WTC11 (cell line): ENCODE measurements at regions of chr17 and their contacts with region 1.

Region 1: GRCh38 chr17:31433091-31433790 is 41.8 kb downstream of the RAB11FIP4 start:
- DNase-seq: no peak
- ATAC-seq: no peak
- H3K4me3 Mint-ChIP-seq: no peak overlapping the region
- H3K27ac Mint-ChIP-seq: no peak overlapping the region
- H3K4me1 Mint-ChIP-seq: peaks cover 13% of the 10 kb centered on the region
- H3K27me3 Mint-ChIP-seq: no peaks in the 10 kb centered on the region; the same call in 1 of the 2 replicates
- CTCF ChIP-seq: no peak

Region 2: DNA sequence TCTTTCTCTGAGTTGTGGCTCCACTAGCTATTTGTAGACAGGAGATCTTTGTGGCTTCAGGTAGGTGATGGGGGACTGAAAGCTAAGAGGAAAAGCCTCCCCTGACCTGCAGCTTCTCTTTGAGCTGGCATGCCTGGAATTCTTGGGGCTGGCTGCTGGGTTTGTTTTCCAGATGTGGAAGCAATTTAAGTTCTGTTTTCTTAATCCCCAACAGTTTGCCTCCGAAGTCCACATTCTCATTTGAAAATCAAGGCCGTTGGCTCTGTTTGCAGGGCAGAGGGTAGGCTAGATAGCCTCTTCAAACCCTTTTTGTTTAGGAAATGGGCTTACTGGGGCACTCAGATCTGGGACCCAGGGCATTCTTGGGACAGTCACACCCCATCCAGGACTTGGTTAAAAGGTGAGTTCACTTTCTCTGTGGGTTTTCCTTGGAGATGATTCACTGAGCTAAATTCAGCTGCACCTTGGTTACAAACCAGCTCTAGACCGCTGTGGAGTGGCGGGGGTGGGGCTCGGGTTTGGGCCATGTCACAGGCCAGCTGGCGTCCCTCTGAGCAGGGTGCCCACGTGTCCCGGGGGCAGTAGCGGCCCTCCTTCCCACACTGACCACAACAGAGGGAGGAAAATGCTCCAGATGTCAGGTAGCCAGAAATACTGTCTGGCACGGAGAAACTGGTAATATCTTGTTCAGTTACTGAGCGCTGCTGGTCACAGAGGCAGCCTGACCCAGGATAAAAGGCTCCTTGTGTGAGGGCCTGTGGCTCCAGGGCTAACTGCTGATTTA is 66.7 kb after region 1 on chr17:
- CTCF ChIA-PET with region 1: interaction called, 11 read pairs
- POLR2A ChIA-PET with region 1: interaction called, 4 read pairs
- DNase-seq: no peak
- ATAC-seq: peak; percentile 67
- H3K4me3 Mint-ChIP-seq: no peak overlapping the region
- H3K27ac Mint-ChIP-seq: peak overlapping the region; percentile 79
- H3K4me1 Mint-ChIP-seq: peaks cover 62% of the 10 kb centered on the region
- H3K27me3 Mint-ChIP-seq: no peaks in the 10 kb centered on the region
- CTCF ChIP-seq: no peak

Region 3: GRCh38 chr17:31509095-31509804 is 76.0 kb after region 1 on chr17:
- CTCF ChIA-PET with region 1: interaction called, 13 read pairs
- POLR2A ChIA-PET with region 1: no interaction called
- DNase-seq: no peak
- ATAC-seq: no peak
- H3K4me3 Mint-ChIP-seq: no peak overlapping the region
- H3K27ac Mint-ChIP-seq: peak overlapping the region; percentile 92
- H3K4me1 Mint-ChIP-seq: peaks cover 18% of the 10 kb centered on the region
- H3K27me3 Mint-ChIP-seq: no peaks in the 10 kb centered on the region
- CTCF ChIP-seq: no peak

Region 4: GRCh38 chr17:31524926-31525800 is 91.9 kb after region 1 on chr17:
- CTCF ChIA-PET with region 1: interaction called, 49 read pairs
- POLR2A ChIA-PET with region 1: interaction called, 3 read pairs
- DNase-seq: peak; percentile 97
- ATAC-seq: peak; percentile 90
- H3K4me3 Mint-ChIP-seq: no peak overlapping the region
- H3K27ac Mint-ChIP-seq: no peak overlapping the region
- H3K4me1 Mint-ChIP-seq: no peaks in the 10 kb centered on the region
- H3K27me3 Mint-ChIP-seq: no peaks in the 10 kb centered on the region
- CTCF ChIP-seq: peak; percentile 83